HepG2 (cell line): ENCODE measurements at regions of chr7 and their contacts with region 1.

Region 1: DNA sequence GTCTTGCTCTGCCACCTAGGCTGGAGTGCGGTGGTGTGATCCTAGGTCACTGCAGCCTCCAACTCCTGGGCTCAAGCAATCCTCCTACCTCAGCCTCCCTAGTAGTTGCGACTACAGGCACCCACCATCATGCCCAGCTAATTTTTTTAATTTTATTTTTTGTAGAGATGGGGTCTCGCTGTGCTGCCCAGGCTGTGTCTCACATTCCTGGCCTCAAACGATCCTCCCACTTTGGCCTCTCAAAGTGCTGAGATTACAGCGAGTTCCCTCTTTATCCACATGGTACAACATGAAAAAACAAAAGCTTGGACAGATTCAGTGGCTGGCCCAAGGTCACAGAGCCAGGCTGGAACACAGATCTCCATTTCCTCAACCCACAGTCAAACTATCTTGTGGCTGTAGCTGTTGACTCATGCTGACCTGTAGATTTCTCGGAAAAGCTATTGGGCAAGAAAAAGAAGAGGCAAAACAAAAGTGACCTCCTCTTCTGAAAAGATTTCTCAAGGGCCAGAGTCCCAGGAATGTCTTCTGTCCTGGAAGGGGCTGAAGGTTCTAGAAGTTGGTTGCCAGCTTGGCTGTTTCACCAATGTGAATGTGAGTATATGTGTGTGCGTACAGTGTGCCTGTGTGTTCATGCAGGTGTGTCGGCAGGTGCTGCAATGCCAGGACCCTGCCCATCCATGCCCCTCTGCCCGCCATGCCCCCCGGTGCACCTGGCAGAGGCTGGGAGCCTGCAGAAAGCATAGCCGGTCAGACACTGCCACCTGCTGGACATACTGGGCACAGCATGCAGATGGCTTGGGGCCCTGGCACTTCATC is 28.4 kb downstream of the TMEM130 start:
- DNase-seq: peak; percentile 20
- ATAC-seq: peak; percentile 73
- H3K4me3 ChIP-seq: no peak overlapping the region
- H3K27ac ChIP-seq: no peak overlapping the region
- H3K4me1 ChIP-seq: no peaks in the 10 kb centered on the region
- H3K27me3 ChIP-seq: peaks cover 3 to 9% of the 10 kb centered on the region in 2 experiments; a peak in 2 of 5 replicates
- CTCF ChIP-seq: peak; percentile 98
- EP300 ChIP-seq: no peak
- POLR2A ChIP-seq: no peak
- RAD21 ChIP-seq: peak; percentile 88

Region 2: DNA sequence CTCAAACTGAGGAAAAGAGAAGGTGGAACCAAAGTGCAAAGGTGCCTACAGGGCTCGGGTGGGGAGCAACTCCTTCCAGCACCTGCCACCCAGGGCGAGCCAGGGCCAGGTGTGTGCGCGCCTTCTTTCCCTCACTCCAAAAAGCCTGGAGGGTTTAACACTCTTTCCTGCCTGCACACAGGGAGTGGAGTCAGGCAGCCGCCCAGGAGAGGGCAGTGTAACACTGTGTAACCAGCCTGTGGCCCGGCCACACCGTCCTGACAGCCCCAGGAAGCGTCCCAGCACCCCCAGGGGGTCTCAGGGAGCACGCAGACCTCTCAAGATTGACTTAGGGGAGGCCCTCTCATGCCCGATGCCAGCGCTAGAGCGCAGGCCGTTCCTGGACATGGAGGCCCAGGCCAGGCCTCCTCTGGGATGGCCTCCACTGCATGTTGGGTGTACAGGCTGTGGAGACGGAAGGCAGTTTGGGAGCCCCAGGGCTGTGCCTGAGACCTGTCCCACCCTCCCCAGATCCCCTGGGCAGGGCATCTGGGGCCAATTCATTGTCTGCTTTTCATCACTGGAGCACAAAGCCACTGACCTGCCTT is 546.5 kb before region 1 on chr7:
- CTCF ChIA-PET with region 1: no interaction called
- POLR2A ChIA-PET with region 1: no interaction called
- in situ Hi-C with region 1: loop called (anchors 10 kb)
- intact Hi-C with region 1: no loop called
- DNase-seq: peak; percentile 35
- ATAC-seq: peak; percentile 89
- H3K4me3 ChIP-seq: no peak overlapping the region
- H3K27ac ChIP-seq: no peak overlapping the region
- H3K4me1 ChIP-seq: 0 out of 2 replicates have a peak, but pooled peaks cover under 1% of the 10 kb centered on the region
- H3K27me3 ChIP-seq: no peaks in the 10 kb centered on the region
- CTCF ChIP-seq: peak; percentile 88
- EP300 ChIP-seq: no peak
- POLR2A ChIP-seq: no peak
- RAD21 ChIP-seq: peak; percentile 87

Region 3: DNA sequence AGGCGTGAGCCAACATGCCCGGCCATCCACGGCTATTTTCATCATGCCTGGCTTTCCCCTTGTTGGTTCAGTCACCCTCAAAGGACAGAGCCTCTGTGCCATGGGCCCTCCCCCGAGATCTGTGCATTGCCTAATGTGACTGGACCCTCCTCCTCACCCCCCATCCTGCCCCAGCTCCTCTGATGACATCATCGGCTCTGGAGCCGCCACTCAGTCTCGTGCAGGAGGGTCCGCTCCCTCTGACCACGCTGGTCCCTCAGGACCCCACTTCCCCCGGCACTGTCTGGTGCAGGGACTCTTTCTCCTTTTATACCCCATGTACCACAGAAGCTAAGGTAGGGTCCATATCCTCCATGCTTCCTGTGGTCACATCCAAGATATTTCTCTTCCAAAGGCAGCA is 407.3 kb before region 1 on chr7:
- CTCF ChIA-PET with region 1: interaction called, 27 read pairs
- POLR2A ChIA-PET with region 1: no interaction called
- in situ Hi-C with region 1: no loop called
- intact Hi-C with region 1: loop called (anchors 1 kb)
- DNase-seq: no peak
- ATAC-seq: no peak
- H3K4me3 ChIP-seq: no peak overlapping the region
- H3K27ac ChIP-seq: no peak overlapping the region
- H3K4me1 ChIP-seq: no peaks in the 10 kb centered on the region
- H3K27me3 ChIP-seq: no peaks in the 10 kb centered on the region
- CTCF ChIP-seq: no peak
- EP300 ChIP-seq: no peak
- POLR2A ChIP-seq: no peak
- RAD21 ChIP-seq: no peak

Region 4: GRCh38 chr7:98745722-98746318 is 95.6 kb before region 1 on chr7:
- CTCF ChIA-PET with region 1: no interaction called
- POLR2A ChIA-PET with region 1: no interaction called
- in situ Hi-C with region 1: no loop called
- intact Hi-C with region 1: no loop called
- DNase-seq: peak; percentile 53
- ATAC-seq: peak; percentile 79
- H3K4me3 ChIP-seq: no peak overlapping the region
- H3K27ac ChIP-seq: no peak overlapping the region
- H3K4me1 ChIP-seq: no peaks in the 10 kb centered on the region
- H3K27me3 ChIP-seq: peaks cover 2 to 14% of the 10 kb centered on the region in 2 experiments; a peak in 2 of 5 replicates
- CTCF ChIP-seq: peak; percentile 82
- EP300 ChIP-seq: no peak
- POLR2A ChIP-seq: no peak
- RAD21 ChIP-seq: peak; percentile 64